Common myeloid progenitor, CD34-positive (primary cell): ENCODE measurements at regions of chr1 and their contacts with region 1.

Region 1: DNA sequence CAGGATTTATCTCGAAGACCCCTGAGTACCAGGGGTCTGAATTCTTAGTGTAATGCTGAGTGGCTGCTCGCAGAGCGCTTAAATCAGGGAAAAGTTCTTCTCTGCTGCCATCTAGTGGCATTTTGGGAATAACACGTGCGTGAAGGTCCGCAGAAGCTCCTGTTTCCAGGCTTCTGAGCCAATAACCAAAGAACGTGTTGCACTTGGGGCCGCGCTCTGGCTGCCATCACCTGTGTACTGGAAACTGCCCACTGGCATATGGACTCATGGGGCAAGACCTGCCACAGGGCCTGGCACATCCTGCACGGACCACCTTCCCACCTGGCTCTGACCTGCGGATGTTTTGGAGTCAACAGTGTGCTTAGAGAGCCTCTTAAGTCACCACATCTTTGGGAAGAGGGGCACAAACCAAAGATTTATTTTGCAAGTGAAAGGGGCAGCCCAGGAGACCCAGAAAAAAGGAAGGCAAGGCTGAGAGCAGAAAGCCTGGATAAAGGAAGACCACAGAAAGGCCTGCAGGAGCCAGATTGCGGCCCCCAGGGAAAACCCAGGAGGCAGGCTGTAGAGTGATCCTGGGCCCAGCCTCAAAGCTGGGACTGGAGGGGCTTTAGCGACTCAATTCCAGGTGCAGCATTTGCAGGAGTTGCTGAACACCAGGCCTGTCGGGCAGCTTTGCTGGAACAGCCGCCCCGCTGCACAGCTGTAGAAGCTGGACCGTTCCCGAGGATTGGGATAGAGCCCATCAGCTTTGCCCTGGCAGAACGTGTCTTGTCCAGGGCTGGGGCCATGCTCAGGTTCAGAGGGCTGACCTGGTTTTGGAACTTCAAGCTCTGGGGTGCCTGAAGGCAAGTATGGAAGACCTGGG is 13.0 kb downstream of the CHIT1 start:
- DNase-seq: peak; percentile 74 to 86 (median 77)
- H3K4me3 ChIP-seq: no peak overlapping the region
- H3K27ac ChIP-seq: no peak overlapping the region
- H3K4me1 ChIP-seq: peaks cover 0 to 19% (median 9%) of the 10 kb centered on the region in 4 experiments
- H3K27me3 ChIP-seq: peaks cover 0 to 13% (median 0%) of the 10 kb centered on the region in 5 experiments

Region 2: GRCh38 chr1:203117611-203118575 is 98.6 kb before region 1 on chr1:
- CTCF ChIA-PET with region 1: interaction called, 37 read pairs
- POLR2A ChIA-PET with region 1: interaction called, 3 read pairs
- DNase-seq: peak; percentile 59 to 72 (median 72)
- H3K4me3 ChIP-seq: no peak overlapping the region
- H3K27ac ChIP-seq: no peak overlapping the region
- H3K4me1 ChIP-seq: peaks cover 0 to 13% (median 9%) of the 10 kb centered on the region in 4 experiments
- H3K27me3 ChIP-seq: peaks cover 0 to 67% (median 28%) of the 10 kb centered on the region in 5 experiments

Region 3: DNA sequence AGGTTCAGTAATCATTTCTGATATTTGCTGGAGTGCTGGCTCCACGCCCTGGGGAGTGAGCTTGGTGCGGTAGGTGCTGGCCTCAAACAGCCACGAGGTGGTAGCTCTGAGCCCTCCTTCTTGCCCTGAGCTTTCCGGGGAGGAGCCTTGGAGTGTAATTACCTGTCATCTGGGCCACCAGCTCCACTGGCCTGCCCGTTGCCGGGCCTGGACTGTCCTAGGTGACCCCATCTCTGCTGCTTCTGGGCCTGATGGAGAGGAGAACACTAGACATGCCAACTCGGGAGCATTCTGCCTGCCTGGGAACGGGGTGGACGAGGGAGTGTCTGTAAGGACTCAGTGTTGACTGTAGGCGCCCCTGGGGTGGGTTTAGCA is 50.0 kb before region 1 on chr1:
- CTCF ChIA-PET with region 1: interaction called, 34 read pairs
- POLR2A ChIA-PET with region 1: no interaction called
- DNase-seq: peak; percentile 36 to 62 (median 62)
- H3K4me3 ChIP-seq: no peak overlapping the region
- H3K27ac ChIP-seq: no peak overlapping the region
- H3K4me1 ChIP-seq: peaks cover 0 to 8% (median 0%) of the 10 kb centered on the region in 4 experiments
- H3K27me3 ChIP-seq: peaks cover 0 to 5% (median 3%) of the 10 kb centered on the region in 5 experiments

Region 4: GRCh38 chr1:203202431-203203245 is 13.9 kb before region 1 on chr1:
- CTCF ChIA-PET with region 1: interaction called, 42 read pairs
- POLR2A ChIA-PET with region 1: no interaction called
- DNase-seq: no peak
- H3K4me3 ChIP-seq: no peak overlapping the region
- H3K27ac ChIP-seq: no peak overlapping the region
- H3K4me1 ChIP-seq: peaks cover 0 to 10% (median 0%) of the 10 kb centered on the region in 4 experiments
- H3K27me3 ChIP-seq: peaks cover 0 to 4% (median 2%) of the 10 kb centered on the region in 5 experiments

Region 5: DNA sequence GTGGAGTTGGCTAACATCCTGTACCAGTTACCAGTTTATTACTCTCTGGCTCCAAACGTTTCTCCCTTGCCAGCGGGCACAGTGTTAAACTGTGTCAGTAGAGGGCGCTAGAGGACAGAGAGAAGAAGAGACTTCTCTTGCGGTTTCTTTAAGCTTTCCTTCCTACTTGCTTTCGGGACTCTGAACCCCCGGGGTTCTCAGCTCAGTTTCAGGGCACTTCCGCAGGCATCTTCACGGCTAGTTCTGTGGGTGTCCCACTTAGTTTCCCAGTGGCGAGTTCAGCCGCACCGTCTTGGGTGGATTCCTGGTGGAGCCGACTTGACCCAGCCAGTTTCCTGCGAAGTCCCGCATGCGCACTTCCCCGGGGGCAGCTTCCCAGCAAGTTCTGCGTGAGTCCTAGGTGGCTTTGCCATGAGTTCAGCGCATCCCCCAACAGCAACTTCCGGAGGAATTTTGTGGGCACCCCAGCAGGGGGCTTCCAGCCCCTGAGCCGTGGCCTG is 50.9 kb after region 1 on chr1:
- CTCF ChIA-PET with region 1: interaction called, 11 read pairs
- POLR2A ChIA-PET with region 1: no interaction called
- DNase-seq: peak; percentile 85 to 92 (median 89)
- H3K4me3 ChIP-seq: peak overlapping the region; percentile 41 to 82 (median 72)
- H3K27ac ChIP-seq: peak overlapping the region in 1 of 2 experiments; percentile 43
- H3K4me1 ChIP-seq: peaks cover 0 to 28% (median 20%) of the 10 kb centered on the region in 4 experiments
- H3K27me3 ChIP-seq: no peaks in the 10 kb centered on the region

Region 6: GRCh38 chr1:203448521-203449061 is 232.1 kb after region 1 on chr1:
- CTCF ChIA-PET with region 1: no interaction called
- POLR2A ChIA-PET with region 1: no interaction called
- DNase-seq: no peak
- H3K4me3 ChIP-seq: no peak overlapping the region
- H3K27ac ChIP-seq: no peak overlapping the region
- H3K4me1 ChIP-seq: peaks cover 0 to 2% (median 0%) of the 10 kb centered on the region in 4 experiments
- H3K27me3 ChIP-seq: peaks cover 0 to 10% (median 7%) of the 10 kb centered on the region in 5 experiments

Region 7: GRCh38 chr1:203559523-203559922 is 343.0 kb after region 1 on chr1:
- CTCF ChIA-PET with region 1: no interaction called
- POLR2A ChIA-PET with region 1: no interaction called
- DNase-seq: no peak
- H3K4me3 ChIP-seq: no peak overlapping the region
- H3K27ac ChIP-seq: no peak overlapping the region
- H3K4me1 ChIP-seq: no peaks in the 10 kb centered on the region
- H3K27me3 ChIP-seq: peaks cover 0 to 2% (median 0%) of the 10 kb centered on the region in 5 experiments